ENCODE measurements at regions of chr13 and their contacts with region 1.

Region 1: DNA sequence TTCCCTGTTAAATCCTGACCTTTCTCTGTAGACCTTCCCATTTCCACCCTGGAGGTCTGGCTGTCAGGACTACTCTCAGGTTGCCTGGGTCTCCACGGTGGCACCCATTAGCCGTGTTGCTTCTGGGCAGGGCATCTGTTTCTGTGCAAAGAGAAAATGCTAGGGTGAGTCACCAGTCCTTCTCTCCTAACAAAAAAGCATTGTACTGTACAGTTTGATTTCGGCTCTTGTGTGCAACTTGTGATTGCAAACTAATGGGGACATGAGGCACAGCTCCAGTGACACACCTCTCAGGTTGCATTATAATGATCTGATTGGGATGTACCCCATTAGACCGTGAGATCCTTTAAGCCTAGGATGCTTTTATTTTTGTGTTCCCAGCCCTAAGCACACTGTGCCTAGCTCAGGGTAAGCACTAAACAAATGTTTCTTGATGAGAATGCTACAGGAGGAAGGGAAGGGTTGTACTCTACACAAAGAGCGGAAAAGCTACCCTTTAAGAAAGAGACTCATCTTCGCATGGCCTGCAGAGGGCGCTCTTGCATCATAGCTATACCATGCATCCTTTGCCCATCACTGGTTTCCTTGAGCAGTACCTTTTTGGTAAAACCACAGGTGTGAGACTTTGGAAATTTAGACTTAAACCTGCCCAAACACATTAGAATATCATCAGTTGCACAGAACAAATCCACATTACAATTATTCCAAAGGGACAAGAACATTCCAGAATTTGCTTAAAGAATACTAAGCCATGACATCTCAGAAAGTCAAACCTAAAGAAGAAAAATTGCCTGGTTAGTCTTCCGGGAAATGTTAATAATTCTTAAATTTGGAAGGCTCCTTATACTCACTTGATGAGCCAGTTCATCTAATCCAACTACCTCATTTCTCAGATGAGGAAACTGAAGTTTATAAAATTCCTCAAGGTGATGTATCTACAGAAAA is 20.3 kb upstream of the TRIM13 start:
- DNase-seq: peak; percentile 50
- H3K4me3 Mint-ChIP-seq: no peak overlapping the region
- H3K27ac Mint-ChIP-seq: no peak overlapping the region
- H3K4me1 Mint-ChIP-seq: peaks cover 8% of the 10 kb centered on the region
- H3K27me3 Mint-ChIP-seq: no peaks in the 10 kb centered on the region

Region 2: DNA sequence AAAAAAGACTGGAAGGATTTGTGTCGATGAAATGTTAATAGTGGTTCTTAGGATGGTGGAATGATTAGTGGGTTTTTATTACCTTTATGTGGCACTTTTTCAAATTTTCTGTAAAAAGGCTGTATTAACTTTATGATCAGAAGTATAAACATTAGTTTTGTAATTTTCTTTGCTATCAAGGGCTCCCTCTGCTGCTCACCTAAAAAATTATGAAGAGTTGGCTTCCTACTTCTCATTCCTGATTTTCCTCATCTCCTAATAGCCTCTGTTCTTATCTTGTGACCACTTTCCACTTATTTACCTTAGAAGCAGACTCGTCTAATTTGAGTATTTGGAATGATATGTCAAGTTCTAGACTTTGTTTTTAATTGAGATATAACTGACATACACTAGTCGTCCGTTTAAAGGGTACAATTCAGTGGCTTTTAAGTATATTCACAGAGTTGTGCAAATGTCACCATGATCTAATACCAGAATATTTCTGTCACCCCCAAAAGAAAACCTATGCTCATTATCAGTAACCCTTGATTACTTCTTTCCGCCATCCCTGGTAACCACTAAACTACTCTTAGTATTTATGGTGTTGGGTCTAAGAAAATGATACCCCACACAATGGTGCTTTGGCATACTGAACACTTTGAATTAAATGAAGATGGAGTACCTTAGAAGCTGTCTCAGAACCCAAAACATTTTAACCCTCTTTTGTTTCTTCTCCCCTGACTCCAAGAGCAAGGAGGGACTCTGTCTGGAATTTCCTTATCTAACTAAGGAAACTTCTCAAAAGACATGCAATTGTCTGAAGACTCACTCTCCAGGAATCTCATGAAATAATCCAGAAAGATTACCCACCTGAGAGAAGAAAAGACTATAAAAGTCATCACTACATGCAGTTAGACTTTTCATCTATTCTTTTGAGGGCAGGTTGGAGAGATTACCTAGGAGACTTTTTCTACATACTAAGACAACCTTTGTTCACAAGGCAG is 555.6 kb after region 1 on chr13:
- intact Hi-C with region 1: loop called (anchors 2 kb)
- DNase-seq: no peak
- H3K4me3 Mint-ChIP-seq: no peak overlapping the region
- H3K27ac Mint-ChIP-seq: no peak overlapping the region
- H3K4me1 Mint-ChIP-seq: peaks cover 20% of the 10 kb centered on the region
- H3K27me3 Mint-ChIP-seq: peaks cover 43% of the 10 kb centered on the region

Region 3: DNA sequence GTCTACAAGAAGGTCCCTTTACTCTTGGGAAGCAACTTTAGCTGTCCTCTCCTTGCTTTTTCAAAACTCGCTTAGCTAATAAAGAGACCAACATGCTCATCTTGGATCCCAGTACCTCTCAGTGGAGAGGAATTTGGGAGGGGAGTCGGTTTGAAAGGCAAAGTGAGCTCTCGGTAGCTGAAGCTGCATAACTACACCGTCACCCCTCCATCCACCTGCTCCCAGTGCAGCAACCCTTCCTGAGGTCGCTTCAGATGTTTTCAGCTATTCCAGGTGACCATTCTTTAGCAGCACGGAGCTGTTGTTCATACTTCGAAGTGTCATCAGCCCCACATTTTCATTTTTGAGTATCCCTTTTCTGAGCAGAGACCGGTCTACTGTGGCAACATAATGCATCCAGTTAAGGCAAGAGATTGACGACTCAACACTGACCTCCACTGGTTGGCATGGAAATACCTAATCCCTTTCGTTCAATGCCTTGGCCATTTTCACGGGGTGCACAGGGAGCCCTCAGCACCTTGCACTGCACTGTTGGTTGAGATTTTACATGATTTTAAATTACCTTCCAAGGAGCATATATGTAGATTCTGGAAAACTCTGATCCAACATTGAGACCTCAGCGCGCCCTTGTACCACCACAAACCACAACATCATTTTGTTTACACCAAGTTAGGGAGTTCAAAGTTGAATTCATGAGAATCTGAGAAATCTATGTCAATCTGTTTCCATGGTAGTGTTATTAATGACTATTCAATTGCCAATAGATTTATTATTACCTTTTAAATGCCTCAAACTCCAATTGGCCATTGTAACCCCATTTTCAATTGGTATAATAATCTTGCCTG is 824.7 kb after region 1 on chr13:
- intact Hi-C with region 1: loop called (anchors 1 kb)
- DNase-seq: peak; percentile 53
- H3K4me3 Mint-ChIP-seq: no peak overlapping the region
- H3K27ac Mint-ChIP-seq: no peak overlapping the region
- H3K4me1 Mint-ChIP-seq: peaks cover 20% of the 10 kb centered on the region
- H3K27me3 Mint-ChIP-seq: peaks cover 6% of the 10 kb centered on the region

Region 4: GRCh38 chr13:51070005-51070649 is 1093.5 kb after region 1 on chr13:
- intact Hi-C with region 1: loop called (anchors 1 kb)
- DNase-seq: peak; percentile 72
- H3K4me3 Mint-ChIP-seq: no peak overlapping the region
- H3K27ac Mint-ChIP-seq: no peak overlapping the region
- H3K4me1 Mint-ChIP-seq: peaks cover 29% of the 10 kb centered on the region
- H3K27me3 Mint-ChIP-seq: peaks cover 16% of the 10 kb centered on the region